Posterior vena cava (tissue), 2 donors: ENCODE measurements at regions of chr4 and their contacts with region 1.

Region 1: DNA sequence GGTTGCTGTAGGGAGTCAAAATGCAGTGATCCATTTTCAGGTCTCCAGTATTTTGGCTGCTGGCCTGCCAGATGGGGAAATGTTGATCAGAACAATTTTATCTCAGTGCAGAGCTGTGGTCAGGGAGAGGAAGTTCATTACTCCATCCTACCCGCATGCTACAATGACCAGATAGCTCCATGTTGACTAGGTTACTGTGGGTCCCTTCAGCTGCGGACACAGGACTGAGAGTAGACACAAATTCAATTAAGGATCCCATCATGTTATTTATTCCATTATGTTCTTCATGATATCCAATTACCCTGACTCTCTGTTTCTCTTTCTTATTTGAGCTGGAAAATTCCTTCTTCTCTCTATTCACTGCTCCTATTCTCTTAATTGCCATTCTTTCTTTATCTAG is 16.3 kb downstream of the SYNPO2 start:
- DNase-seq: no peak

Region 2: GRCh38 chr4:118224239-118224829 is 680.6 kb before region 1 on chr4:
- intact Hi-C with region 1: no loop called
- DNase-seq: no peak

Region 3: DNA sequence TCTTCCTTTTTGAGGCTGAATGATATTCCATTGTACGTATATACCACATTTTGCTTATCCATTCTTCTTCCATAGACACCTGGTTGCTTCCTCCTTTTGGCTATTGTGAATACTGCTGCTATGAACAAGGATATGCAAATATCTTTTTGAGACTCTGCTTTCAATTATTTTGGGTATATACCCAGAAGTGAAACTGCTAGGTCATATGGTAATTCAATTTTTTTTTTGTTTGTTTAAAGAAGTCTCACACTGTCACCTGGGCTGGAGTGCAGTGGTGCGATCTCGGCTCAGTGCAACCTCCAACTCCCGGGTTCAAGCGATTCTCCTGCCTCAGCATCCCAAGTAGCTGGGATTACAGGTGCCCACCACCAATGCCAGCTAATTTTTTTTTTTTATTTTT is 144.4 kb before region 1 on chr4:
- intact Hi-C with region 1: no loop called
- DNase-seq: no peak

Region 4: DNA sequence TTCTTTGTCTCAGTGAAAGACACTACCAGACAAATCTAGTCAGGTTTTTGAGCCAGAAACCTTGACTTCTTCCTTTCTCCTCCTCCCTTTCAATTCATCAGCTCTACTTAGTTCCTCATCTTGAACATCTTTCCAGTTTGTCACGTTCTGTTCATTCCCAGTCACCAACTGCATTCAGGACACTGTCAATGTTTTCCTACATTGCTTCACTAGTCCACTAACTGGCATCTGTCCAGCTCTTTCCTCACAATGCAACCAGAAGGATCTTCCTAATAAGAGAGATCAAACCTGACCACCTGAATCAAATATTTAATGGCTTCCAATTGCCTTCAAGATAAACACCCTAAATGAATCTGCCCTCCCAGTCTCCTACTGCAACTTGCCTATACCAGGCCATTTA is 36.2 kb after region 1 on chr4:
- intact Hi-C with region 1: no loop called
- DNase-seq: no peak

Region 5: GRCh38 chr4:118954246-118954645 is 49.3 kb after region 1 on chr4:
- intact Hi-C with region 1: loop called in 1 of 2 experiments (anchors 5 kb)
- DNase-seq: no peak

Region 6: DNA sequence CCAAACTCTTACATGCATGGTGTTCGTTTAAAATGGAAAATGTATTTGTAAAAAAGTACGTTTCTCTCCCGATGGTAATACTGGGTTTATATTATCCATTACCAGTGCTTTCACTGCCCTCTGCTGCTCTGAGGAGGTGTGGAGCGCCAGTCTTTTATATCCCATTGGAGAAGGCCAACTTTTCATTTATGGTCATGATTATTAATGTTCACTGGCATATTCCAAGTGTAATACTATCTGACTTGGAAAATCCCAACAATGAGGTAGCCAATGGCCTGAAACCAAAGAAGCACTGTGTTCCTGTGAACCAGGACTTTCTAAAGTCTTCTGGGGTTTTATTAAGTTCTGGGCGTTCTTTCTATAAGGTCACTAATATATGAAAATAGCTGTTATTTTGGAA is 64.4 kb after region 1 on chr4:
- intact Hi-C with region 1: no loop called
- DNase-seq: peak; percentile 83